ENCODE measurements at regions of chr3 and their contacts with region 1.

Region 1: GRCh38 chr3:133384331-133385027 is 15.4 kb upstream of the BFSP2 start:
- DNase-seq: peak; percentile 59 to 76 (median 67)
- ATAC-seq: peak; percentile 88 to 90 (median 89)
- H3K4me3 ChIP-seq: no peak overlapping the region
- H3K27ac ChIP-seq: no peak overlapping the region
- H3K4me1 ChIP-seq: peaks cover 0 to 23% (median 4%) of the 10 kb centered on the region in 4 donors
- H3K27me3 ChIP-seq: no peaks in the 10 kb centered on the region
- CTCF ChIP-seq: peak; percentile 65 to 79 (median 72)
- POLR2A ChIP-seq: no peak

Region 2: GRCh38 chr3:133040696-133041523 is 343.6 kb before region 1 on chr3:
- intact Hi-C with region 1: loop called (anchors 10 kb)
- DNase-seq: peak; percentile 54 to 75 (median 66)
- ATAC-seq: peak; percentile 86 to 94 (median 90)
- H3K4me3 ChIP-seq: no peak overlapping the region
- H3K27ac ChIP-seq: no peak overlapping the region
- H3K4me1 ChIP-seq: peaks cover 0 to 15% (median 0%) of the 10 kb centered on the region in 4 donors
- H3K27me3 ChIP-seq: peaks cover 13 to 19% of the 10 kb centered on the region in 2 donors
- CTCF ChIP-seq: peak; percentile 70 to 83 (median 79)
- POLR2A ChIP-seq: no peak